WTC11 (cell line): ENCODE measurements at regions of chr13 and their contacts with region 1.

Region 1: DNA sequence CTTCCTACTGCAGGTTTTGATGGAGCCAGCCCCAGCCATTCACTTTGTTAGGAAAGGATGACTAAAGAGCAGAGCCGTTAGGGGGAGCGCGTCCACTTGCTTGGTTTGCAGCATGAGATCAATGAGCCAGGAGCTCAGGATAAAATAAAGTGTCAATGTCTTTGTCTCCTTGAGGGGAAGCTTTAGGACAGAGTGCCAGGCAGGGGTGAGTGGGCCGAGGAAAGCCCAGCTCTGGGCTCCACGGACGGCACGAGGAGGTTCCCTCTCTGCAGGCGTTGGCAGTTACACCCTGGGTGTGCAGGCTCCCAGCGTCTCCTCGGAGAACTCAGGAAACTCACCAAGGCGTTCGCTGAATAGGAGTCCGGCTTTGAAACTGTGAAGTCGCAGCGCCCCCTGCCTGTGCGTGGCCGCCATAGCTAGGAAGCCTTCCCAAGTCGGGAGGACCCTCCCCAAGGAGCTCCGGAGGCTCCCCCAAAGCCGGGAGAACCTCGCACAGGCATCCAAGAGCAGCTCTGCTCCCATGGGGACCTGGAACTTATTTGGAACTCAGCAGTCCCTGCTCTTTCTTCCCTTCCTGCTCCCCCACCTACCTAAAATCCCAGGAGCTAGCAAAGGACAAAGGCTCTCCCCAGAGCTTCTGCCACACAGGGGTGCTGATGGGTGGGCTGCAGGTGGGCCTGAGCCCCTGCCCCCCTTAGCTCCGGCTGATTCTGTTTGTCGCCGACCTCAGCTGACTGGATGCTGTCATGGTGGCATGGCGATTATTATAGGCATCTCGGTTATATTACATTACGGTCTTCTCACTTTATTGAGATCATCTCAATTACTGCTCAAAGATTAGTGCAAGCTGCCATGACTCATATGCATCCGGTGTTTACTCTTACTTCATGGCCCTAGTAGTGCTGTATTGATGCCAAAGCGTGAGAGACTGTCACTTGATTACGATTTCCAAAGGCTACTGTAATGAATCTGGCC is 34.4 kb downstream of the GSX1 start:
- DNase-seq: peak; percentile 96
- ATAC-seq: peak; percentile 80
- H3K4me3 Mint-ChIP-seq: peak overlapping the region; percentile 59
- H3K27ac Mint-ChIP-seq: no peak overlapping the region
- H3K4me1 Mint-ChIP-seq: peaks cover 27% of the 10 kb centered on the region
- H3K27me3 Mint-ChIP-seq: peaks cover 100% of the 10 kb centered on the region
- CTCF ChIP-seq: peak; percentile 92

Region 2: GRCh38 chr13:27379694-27380641 is 446.7 kb before region 1 on chr13:
- CTCF ChIA-PET with region 1: interaction called, 13 read pairs
- POLR2A ChIA-PET with region 1: no interaction called
- DNase-seq: peak; percentile 85
- ATAC-seq: peak; percentile 84
- H3K4me3 Mint-ChIP-seq: no peak overlapping the region
- H3K27ac Mint-ChIP-seq: no peak overlapping the region
- H3K4me1 Mint-ChIP-seq: peaks cover 25% of the 10 kb centered on the region
- H3K27me3 Mint-ChIP-seq: no peaks in the 10 kb centered on the region; the same call in 1 of the 2 replicates
- CTCF ChIP-seq: peak; percentile 73

Region 3: DNA sequence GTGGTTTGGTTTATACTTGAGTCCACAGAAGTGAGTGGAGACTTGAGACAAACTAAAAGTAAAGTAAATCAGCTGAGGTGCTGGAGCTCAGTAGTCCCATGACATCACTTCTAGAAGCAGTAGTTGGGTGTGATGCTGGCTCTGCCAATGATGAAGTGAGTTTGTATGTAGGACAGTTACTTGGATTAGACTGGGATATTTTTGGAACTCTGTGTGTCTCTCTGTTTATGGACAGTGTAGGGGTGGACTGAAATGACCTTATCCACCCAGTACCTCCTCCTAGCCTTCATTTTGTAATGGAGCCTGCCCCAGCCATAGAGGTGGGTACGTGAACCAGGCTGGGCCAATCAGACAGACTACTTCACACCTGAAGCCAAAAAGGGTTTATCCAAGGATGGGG is 152.8 kb before region 1 on chr13:
- CTCF ChIA-PET with region 1: interaction called, 11 read pairs
- POLR2A ChIA-PET with region 1: no interaction called
- DNase-seq: no peak
- ATAC-seq: no peak
- H3K4me3 Mint-ChIP-seq: no peak overlapping the region
- H3K27ac Mint-ChIP-seq: no peak overlapping the region
- H3K4me1 Mint-ChIP-seq: peaks cover 5% of the 10 kb centered on the region; the same call in 1 of the 2 replicates
- H3K27me3 Mint-ChIP-seq: no peaks in the 10 kb centered on the region
- CTCF ChIP-seq: no peak

Region 4: DNA sequence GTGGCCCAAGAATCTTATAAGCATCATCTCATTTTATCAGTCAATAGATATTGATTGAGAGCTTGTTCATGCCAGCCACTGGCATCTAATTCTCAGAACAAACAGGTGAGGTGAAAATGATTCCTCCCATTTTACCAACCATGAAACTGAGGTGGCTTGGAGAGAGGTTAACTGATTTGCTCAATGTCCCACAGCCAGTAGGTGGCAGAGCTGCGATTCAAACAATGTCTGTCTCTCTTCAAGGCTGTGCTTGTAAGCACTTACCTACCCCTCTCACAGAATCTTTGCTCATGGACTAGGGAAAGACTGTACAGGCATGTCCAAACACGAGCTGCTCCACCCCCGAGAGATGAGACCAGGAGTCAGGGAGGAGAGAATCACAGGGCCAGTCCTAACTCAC is 55.9 kb before region 1 on chr13:
- CTCF ChIA-PET with region 1: interaction called, 112 read pairs
- POLR2A ChIA-PET with region 1: no interaction called
- DNase-seq: peak; percentile 56
- ATAC-seq: peak; percentile 89
- H3K4me3 Mint-ChIP-seq: no peak overlapping the region
- H3K27ac Mint-ChIP-seq: no peak overlapping the region
- H3K4me1 Mint-ChIP-seq: peaks cover 9% of the 10 kb centered on the region
- H3K27me3 Mint-ChIP-seq: peaks cover 45% of the 10 kb centered on the region
- CTCF ChIP-seq: no peak

Region 5: GRCh38 chr13:27839809-27840467 is 13.3 kb after region 1 on chr13:
- CTCF ChIA-PET with region 1: interaction called, 20 read pairs
- POLR2A ChIA-PET with region 1: no interaction called
- DNase-seq: no peak
- ATAC-seq: no peak
- H3K4me3 Mint-ChIP-seq: no peak overlapping the region
- H3K27ac Mint-ChIP-seq: no peak overlapping the region
- H3K4me1 Mint-ChIP-seq: no peaks in the 10 kb centered on the region
- H3K27me3 Mint-ChIP-seq: peaks cover 9% of the 10 kb centered on the region
- CTCF ChIP-seq: no peak

Region 6: DNA sequence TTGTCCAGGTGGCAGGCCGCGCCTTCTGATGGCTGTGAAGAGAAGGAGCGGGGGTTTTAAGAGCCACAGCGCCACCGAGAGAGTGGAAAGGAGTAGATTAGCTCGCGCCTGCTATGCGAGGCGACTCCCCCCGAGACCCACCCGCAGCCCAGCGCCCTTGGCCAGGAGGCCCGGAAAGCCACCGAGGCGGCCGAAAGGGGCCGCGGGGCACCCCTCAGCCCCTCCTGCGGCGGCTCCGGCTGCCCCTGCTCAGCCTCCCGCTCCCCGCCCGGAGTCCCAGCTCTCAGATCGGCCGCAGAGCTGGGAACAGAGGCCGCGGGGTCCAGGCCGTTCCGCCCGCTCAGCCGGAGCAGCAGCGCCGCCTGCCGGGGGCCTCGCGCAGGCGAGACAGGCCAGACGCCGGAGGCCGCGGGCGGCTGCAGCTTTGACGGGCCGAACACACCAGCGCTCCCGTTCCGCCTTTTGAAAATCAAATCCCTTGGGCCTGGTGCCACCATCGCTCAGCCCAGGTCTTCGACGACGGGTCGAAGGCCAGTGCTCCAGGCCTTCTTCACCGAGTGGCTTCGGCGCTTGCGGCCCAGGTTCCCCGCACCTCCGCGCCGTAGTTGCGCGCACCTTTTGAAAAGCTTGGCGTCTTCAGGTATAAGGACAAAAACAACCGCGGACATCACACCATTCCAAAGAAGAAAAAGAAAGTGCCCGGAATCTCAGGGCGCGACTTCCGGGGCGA is 127.2 kb after region 1 on chr13:
- CTCF ChIA-PET with region 1: interaction called, 211 read pairs
- POLR2A ChIA-PET with region 1: interaction called, 5 read pairs
- DNase-seq: peak; percentile 91
- ATAC-seq: peak; percentile 95
- H3K4me3 Mint-ChIP-seq: peak overlapping the region; percentile 74
- H3K27ac Mint-ChIP-seq: no peak overlapping the region
- H3K4me1 Mint-ChIP-seq: peaks cover 6% of the 10 kb centered on the region
- H3K27me3 Mint-ChIP-seq: peaks cover 99% of the 10 kb centered on the region
- CTCF ChIP-seq: peak; percentile 90

Region 7: GRCh38 chr13:28010046-28010445 is 183.4 kb after region 1 on chr13:
- CTCF ChIA-PET with region 1: no interaction called
- POLR2A ChIA-PET with region 1: no interaction called
- DNase-seq: no peak
- ATAC-seq: no peak
- H3K4me3 Mint-ChIP-seq: no peak overlapping the region
- H3K27ac Mint-ChIP-seq: no peak overlapping the region
- H3K4me1 Mint-ChIP-seq: peaks cover 18% of the 10 kb centered on the region
- H3K27me3 Mint-ChIP-seq: peaks cover 4% of the 10 kb centered on the region; the same call in 1 of the 2 replicates
- CTCF ChIP-seq: no peak

Region 8: GRCh38 chr13:28089065-28089464 is 262.4 kb after region 1 on chr13:
- CTCF ChIA-PET with region 1: no interaction called
- POLR2A ChIA-PET with region 1: no interaction called
- DNase-seq: no peak
- ATAC-seq: no peak
- H3K4me3 Mint-ChIP-seq: no peak overlapping the region
- H3K27ac Mint-ChIP-seq: no peak overlapping the region
- H3K4me1 Mint-ChIP-seq: no peaks in the 10 kb centered on the region
- H3K27me3 Mint-ChIP-seq: peaks cover 10% of the 10 kb centered on the region
- CTCF ChIP-seq: no peak

Region 9: GRCh38 chr13:28286263-28286662 is 459.6 kb after region 1 on chr13:
- CTCF ChIA-PET with region 1: no interaction called
- POLR2A ChIA-PET with region 1: no interaction called
- DNase-seq: no peak
- ATAC-seq: no peak
- H3K4me3 Mint-ChIP-seq: no peak overlapping the region
- H3K27ac Mint-ChIP-seq: no peak overlapping the region
- H3K4me1 Mint-ChIP-seq: peaks cover 16% of the 10 kb centered on the region
- H3K27me3 Mint-ChIP-seq: no peaks in the 10 kb centered on the region
- CTCF ChIP-seq: no peak